ENCODE measurements at regions of chr1 and their contacts with region 1.

Region 1: GRCh38 chr1:229558571-229559335 is at the start of gene ABCB10:
- DNase-seq: peak; percentile 88
- H3K4me3 ChIP-seq: peak within 1 kb of the TSS; percentile 53
- H3K27me3 ChIP-seq: no peaks in the 10 kb centered on the region
- CTCF ChIP-seq: peak; percentile 70
- polyA plus RNA-seq, gene ABCB10: 12.7 and 12.8 TPM in 2 replicates

Region 2: GRCh38 chr1:229420765-229421164 is 138.0 kb before region 1 on chr1:
- CTCF ChIA-PET with region 1: no interaction called
- POLR2A ChIA-PET with region 1: no interaction called
- DNase-seq: no peak
- H3K4me3 ChIP-seq: no peak overlapping the region
- H3K27me3 ChIP-seq: no peaks in the 10 kb centered on the region
- CTCF ChIP-seq: no peak

Region 3: GRCh38 chr1:229461032-229461668 is 97.6 kb before region 1 on chr1:
- CTCF ChIA-PET with region 1: no interaction called
- POLR2A ChIA-PET with region 1: no interaction called
- DNase-seq: no peak
- H3K4me3 ChIP-seq: no peak overlapping the region
- H3K27me3 ChIP-seq: no peaks in the 10 kb centered on the region
- CTCF ChIP-seq: no peak

Region 4: GRCh38 chr1:229585338-229585737 is 26.6 kb after region 1 on chr1:
- CTCF ChIA-PET with region 1: no interaction called
- POLR2A ChIA-PET with region 1: no interaction called
- DNase-seq: no peak
- H3K4me3 ChIP-seq: no peak overlapping the region
- H3K27me3 ChIP-seq: no peaks in the 10 kb centered on the region
- CTCF ChIP-seq: no peak

Region 5: DNA sequence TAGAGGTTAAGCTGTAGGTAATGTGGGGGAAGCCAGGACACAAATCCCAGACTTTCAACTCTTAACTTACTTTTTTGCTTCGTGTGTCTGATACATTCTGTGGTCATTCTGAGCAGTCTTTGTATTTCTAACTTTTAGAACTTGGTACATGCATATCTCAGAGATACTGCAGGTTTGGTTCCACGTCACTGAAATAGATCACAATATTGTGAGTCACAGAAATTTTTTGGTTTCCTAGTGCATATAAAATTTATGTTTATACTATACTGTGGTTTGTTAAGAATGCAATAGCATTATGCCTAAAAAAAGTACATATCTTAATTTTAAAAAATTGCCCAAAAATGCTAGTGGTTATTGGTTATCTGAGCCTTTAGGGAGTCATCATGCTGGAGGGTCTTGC is 70.5 kb after region 1 on chr1:
- CTCF ChIA-PET with region 1: interaction called, 14 read pairs
- POLR2A ChIA-PET with region 1: no interaction called
- DNase-seq: no peak
- H3K4me3 ChIP-seq: no peak overlapping the region
- H3K27me3 ChIP-seq: no peaks in the 10 kb centered on the region
- CTCF ChIP-seq: no peak